ENCODE measurements at regions of chr2 and their contacts with region 1.

Region 1: GRCh38 chr2:73156539-73157124 is 43.9 kb upstream of the RAB11FIP5 start:
- DNase-seq: peak; percentile 62
- H3K4me3 Mint-ChIP-seq: no peak overlapping the region
- H3K27ac Mint-ChIP-seq: no peak overlapping the region
- H3K4me1 Mint-ChIP-seq: no peaks in the 10 kb centered on the region
- H3K27me3 Mint-ChIP-seq: peaks cover 30% of the 10 kb centered on the region

Region 2: GRCh38 chr2:72993147-72993932 is 163.3 kb before region 1 on chr2:
- CTCF ChIA-PET with region 1: interaction called, 12 read pairs
- intact Hi-C with region 1: loop called (anchors 1 kb)
- DNase-seq: peak; percentile 42
- H3K4me3 Mint-ChIP-seq: no peak overlapping the region
- H3K27ac Mint-ChIP-seq: no peak overlapping the region
- H3K4me1 Mint-ChIP-seq: no peaks in the 10 kb centered on the region
- H3K27me3 Mint-ChIP-seq: no peaks in the 10 kb centered on the region